ENCODE measurements at regions of chr15 and their contacts with region 1.

Region 1: GRCh38 chr15:75523011-75523410 is 56.1 kb downstream of the PTPN9 start:
- DNase-seq: no peak
- ATAC-seq: no peak

Region 2: GRCh38 chr15:75431682-75432081 is 91.3 kb before region 1 on chr15:
- intact Hi-C with region 1: no loop called
- DNase-seq: no peak
- ATAC-seq: no peak

Region 3: GRCh38 chr15:75578948-75579920 is 56.2 kb after region 1 on chr15 and contains the start of gene PTPN9:
- intact Hi-C with region 1: loop called (anchors 10 kb)
- DNase-seq: peak; percentile 90
- ATAC-seq: peak; percentile 91
- total RNA-seq, gene PTPN9: 7.2 TPM

Measured in Right ventricle myocardium superior (tissue), 1 donor.